Aorta (tissue), 5 donors: ENCODE measurements at regions of chr4 and their contacts with region 1.

Region 1: DNA sequence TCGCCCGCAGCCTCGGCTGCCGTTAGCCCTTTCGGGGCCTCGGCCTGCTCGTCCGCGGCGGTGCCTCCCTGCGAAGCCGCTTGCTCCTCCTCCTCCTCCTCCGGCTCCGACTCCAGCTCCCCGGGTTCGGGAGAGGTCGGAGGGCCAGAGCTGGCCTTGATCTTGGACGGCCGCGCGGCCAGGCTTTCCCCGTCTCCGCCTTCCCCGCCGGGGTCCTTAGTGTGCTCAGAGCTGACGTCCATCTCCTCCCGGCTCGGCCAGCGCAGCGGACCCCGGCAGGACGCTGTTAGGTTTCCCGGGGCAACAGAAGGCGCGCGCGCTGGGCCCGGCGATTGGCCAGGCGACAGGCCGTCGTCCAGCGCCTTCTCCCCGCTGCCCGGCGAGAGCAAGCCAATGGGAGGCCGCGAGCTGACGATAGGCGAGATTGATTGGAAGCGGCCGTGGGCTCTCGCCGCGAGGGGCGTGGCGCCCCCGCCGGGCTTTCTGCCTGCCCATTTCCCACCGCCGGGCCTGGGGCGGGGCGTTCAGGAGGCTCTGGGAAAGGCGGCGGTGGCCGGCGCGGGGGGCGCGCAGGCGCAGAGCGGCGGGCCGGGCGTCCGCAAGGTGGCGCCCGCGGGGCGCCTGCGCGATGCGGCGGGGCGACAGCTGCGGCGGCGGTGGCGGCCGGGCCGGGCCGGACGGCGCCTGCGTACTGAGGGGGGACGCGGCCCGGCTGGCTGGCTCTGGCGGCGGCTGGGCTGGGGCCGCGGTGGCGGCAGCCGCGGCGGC is at the start of gene TADA2B:
- DNase-seq: peak; percentile 98 to 99
- ATAC-seq: peak; percentile 98
- H3K4me3 ChIP-seq: peak within 1 kb of the TSS; percentile 46 to 93
- H3K27ac ChIP-seq: peak within 1 kb of the TSS; percentile 63 to 93
- H3K4me1 ChIP-seq: no peaks in the 10 kb centered on the region
- H3K27me3 ChIP-seq: no peaks in the 10 kb centered on the region
- total RNA-seq, gene TADA2B: 18.1 to 19.2 TPM

Region 2: DNA sequence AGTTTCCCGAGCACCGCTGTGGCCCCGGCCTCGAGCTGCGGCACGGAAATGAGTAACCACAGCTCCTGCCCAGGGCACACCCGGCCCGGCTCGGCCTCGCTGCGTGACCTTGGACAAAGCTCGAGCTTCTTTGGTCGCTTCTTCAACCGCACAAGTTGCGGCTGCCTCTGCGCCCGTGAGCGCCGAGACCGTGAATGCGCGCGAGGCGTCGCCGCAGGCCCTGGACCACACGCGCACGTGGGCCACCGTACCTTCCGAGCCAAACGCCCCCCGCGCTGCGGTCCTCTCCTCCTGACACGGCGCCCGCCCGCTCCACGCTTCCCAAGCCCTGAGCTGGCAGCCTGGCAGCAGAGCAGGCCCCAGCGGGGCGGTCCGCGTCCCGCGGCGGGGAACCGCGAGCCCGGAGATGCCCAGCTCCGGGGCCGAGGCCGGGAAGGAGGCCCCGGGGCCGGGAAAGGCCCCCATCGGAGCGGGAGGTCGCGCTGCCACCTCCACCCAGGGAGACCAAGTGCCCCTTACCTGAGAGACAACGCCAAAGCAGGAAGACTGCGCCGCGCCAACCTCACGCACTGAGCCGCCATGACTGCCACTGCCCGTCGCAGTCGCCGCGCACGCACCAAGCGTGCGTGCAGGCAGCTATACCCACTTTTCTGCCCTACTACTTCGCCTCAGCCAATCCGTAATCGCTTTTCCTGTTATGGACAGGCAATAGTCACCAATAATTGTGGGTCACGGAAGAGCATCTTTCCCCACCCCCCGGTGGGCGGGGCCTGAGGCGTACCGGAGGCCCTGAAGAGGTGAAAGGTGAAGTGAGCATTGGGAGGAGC is 24.8 kb after region 1 on chr4 and contains the start of gene GRPEL1:
- intact Hi-C with region 1: loop called (anchors 1 to 2 kb)
- DNase-seq: peak; percentile 100
- ATAC-seq: peak; percentile 99
- H3K4me3 ChIP-seq: peak within 1 kb of the TSS; percentile 74 to 76
- H3K27ac ChIP-seq: peak within 1 kb of the TSS in 1 of 2 donors; percentile 80
- H3K4me1 ChIP-seq: peaks cover 0 to 6% of the 10 kb centered on the region in 2 donors
- H3K27me3 ChIP-seq: no peaks in the 10 kb centered on the region
- total RNA-seq, gene GRPEL1: 16.1 to 22.0 TPM